HCT116 (cell line): ENCODE measurements at regions of chr11 and their contacts with region 1.

Region 1: GRCh38 chr11:128069665-128070064 is 517.7 kb downstream of the ETS1 start:
- DNase-seq: no peak
- ATAC-seq: no peak
- H3K4me3 ChIP-seq: no peak overlapping the region
- H3K27ac ChIP-seq: no peak overlapping the region
- H3K4me1 ChIP-seq: no peaks in the 10 kb centered on the region
- H3K27me3 ChIP-seq: no peaks in the 10 kb centered on the region
- CTCF ChIP-seq: no peak
- POLR2A ChIP-seq: no peak
- RAD21 ChIP-seq: no peak

Region 2: GRCh38 chr11:128089962-128090361 is 20.3 kb after region 1 on chr11:
- CTCF ChIA-PET with region 1: no interaction called
- POLR2A ChIA-PET with region 1: no interaction called
- RAD21 ChIA-PET with region 1: no interaction called
- intact Hi-C with region 1: loop called (anchors 1 kb)
- DNase-seq: no peak
- ATAC-seq: no peak
- H3K4me3 ChIP-seq: no peak overlapping the region
- H3K27ac ChIP-seq: no peak overlapping the region
- H3K4me1 ChIP-seq: no peaks in the 10 kb centered on the region
- H3K27me3 ChIP-seq: no peaks in the 10 kb centered on the region
- CTCF ChIP-seq: no peak
- POLR2A ChIP-seq: no peak
- RAD21 ChIP-seq: no peak